GM13976 (cell line): ENCODE measurements at regions of chr6 and their contacts with region 1.

Region 1: DNA sequence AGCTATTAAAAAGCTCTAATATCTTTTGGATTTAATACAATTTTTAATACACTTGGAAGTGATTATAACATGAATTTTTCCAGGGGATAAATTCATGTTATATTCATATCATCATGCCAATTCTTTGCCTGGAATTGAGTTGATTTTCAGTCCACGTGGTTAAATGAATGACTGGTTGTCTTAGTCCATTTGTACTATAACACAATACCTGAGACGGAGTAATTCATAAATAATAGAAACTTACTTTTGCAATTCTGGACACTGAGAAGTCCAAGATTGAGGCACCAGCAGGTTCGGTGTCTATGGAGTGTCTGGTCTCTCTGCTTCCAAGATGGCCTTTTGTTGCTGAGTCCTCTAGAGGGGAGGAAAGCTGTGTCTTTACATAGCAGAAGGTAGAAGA is 66.2 kb upstream of the TRDN start:
- DNase-seq: no peak
- CTCF ChIP-seq: no peak

Region 2: GRCh38 chr6:123415844-123416468 is 287.0 kb before region 1 on chr6:
- in situ Hi-C with region 1: loop called (anchors 10 kb)
- DNase-seq: peak; percentile 25
- CTCF ChIP-seq: peak; percentile 60